B cell (primary cell): ENCODE measurements at regions of chr1 and their contacts with region 1.

Region 1: GRCh38 chr1:975896-976683 is 5.8 kb downstream of the PERM1 start:
- DNase-seq: peak; percentile 78
- ATAC-seq: peak; percentile 88
- H3K4me3 ChIP-seq: peak overlapping the region in 3 of 5 experiments; percentile 19 to 36 (median 23)
- H3K4me3 Mint-ChIP-seq: peak overlapping the region; percentile 37
- H3K27ac ChIP-seq: no peak overlapping the region
- H3K27ac Mint-ChIP-seq: no peak overlapping the region
- H3K4me1 ChIP-seq: peaks cover 10% of the 10 kb centered on the region in 2 donors
- H3K4me1 Mint-ChIP-seq: peaks cover 7% of the 10 kb centered on the region
- H3K27me3 ChIP-seq: peaks cover 0 to 55% (median 14%) of the 10 kb centered on the region in 4 experiments
- H3K27me3 Mint-ChIP-seq: peaks cover 21% of the 10 kb centered on the region
- CTCF ChIP-seq: peak; percentile 75

Region 2: DNA sequence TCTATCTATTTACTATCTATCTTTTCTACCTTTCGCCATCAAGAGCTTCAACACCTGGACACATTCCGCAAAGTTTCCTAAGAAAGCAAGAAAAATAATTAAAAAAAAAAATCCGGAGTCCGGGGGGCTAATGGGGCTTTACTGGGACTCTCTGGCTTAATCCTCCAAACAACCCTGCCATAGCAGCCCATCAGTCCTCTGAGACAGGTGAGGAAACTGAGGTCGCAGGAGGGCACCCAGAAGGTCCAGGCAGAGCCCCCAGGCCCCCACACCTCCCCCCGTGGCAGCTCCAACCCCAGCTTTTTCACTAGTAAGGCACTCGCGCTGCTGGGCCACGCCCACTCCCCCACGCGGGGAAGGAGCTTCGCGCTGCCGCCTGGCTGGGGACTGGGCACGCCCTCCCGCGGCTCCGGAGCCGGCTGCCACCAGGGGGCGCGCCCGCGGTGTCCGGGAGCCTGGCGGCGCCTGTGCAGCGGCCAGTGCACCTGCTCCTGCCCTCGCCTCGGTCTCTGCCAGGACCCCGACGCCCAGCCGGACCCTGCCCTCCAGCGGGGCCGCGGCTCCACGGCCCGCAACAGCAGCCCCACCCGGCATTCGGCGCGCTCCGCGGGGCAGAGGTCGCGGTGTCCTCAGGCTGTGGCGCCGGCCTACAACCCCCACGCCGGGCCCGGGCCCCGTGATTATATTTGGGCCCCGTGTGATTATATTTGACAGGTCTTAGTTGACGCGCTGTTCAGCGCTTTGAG is 106.4 kb before region 1 on chr1:
- CTCF ChIA-PET with region 1: interaction called, 8 read pairs
- POLR2A ChIA-PET with region 1: no interaction called
- intact Hi-C with region 1: loop called (anchors 1 kb)
- DNase-seq: peak; percentile 88
- ATAC-seq: peak; percentile 75
- H3K4me3 ChIP-seq: peak overlapping the region in 3 of 5 experiments; percentile 27 to 52 (median 41)
- H3K4me3 Mint-ChIP-seq: peak overlapping the region; percentile 39
- H3K27ac ChIP-seq: no peak overlapping the region
- H3K27ac Mint-ChIP-seq: no peak overlapping the region
- H3K4me1 ChIP-seq: peaks cover 28 to 29% of the 10 kb centered on the region in 2 donors
- H3K4me1 Mint-ChIP-seq: peaks cover 35% of the 10 kb centered on the region
- H3K27me3 ChIP-seq: peaks cover 0 to 4% (median 2%) of the 10 kb centered on the region in 4 experiments
- H3K27me3 Mint-ChIP-seq: peaks cover 16% of the 10 kb centered on the region
- CTCF ChIP-seq: peak; percentile 90

Region 3: DNA sequence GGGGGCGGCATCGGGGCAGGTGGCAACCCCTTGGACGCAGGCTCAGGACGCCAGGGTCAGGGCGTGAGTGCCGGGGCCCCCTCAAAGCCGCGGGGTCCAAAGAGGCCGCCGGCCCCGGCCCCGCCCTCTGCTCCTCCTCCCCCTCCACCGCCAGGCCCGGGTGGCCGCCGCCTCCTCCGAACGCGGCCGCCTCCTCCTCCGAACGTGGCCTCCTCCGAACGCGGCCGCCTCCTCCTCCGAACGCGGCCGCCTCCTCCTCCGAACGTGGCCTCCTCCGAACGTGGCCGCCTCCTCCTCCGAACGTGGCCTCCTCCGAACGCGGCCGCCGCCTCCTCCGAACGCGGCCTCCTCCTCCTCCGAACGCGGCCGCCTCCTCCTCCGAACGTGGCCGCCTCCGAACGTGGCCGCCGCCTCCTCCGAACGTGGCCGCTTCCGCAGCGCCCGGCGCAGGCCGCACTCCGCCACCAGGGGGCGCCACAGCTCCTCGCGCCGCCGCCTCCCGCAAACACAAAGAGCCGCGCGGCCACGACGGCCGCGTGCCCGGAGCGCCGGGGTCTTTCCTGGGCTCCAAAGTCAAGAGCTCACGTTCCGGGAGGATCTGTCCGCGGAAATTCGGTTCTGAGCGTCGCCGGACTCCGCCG is 71.7 kb before region 1 on chr1:
- CTCF ChIA-PET with region 1: interaction called, 18 read pairs
- POLR2A ChIA-PET with region 1: no interaction called
- intact Hi-C with region 1: no loop called
- DNase-seq: peak; percentile 90
- ATAC-seq: peak; percentile 69
- H3K4me3 ChIP-seq: peak overlapping the region in 4 of 5 experiments; percentile 35 to 62 (median 46)
- H3K4me3 Mint-ChIP-seq: peak overlapping the region; percentile 73
- H3K27ac ChIP-seq: no peak overlapping the region
- H3K27ac Mint-ChIP-seq: no peak overlapping the region
- H3K4me1 ChIP-seq: peaks cover 22 to 30% of the 10 kb centered on the region in 2 donors
- H3K4me1 Mint-ChIP-seq: peaks cover 22% of the 10 kb centered on the region
- H3K27me3 ChIP-seq: peaks cover 0 to 48% (median 15%) of the 10 kb centered on the region in 4 experiments
- H3K27me3 Mint-ChIP-seq: peaks cover 42% of the 10 kb centered on the region
- CTCF ChIP-seq: peak; percentile 74